ENCODE measurements at regions of chr2 and their contacts with region 1.

Region 1: GRCh38 chr2:43226558-43226954 is at the start of gene ZFP36L2:
- DNase-seq: peak; percentile 97 to 99
- ATAC-seq: peak; percentile 75 to 81 (median 77)
- H3K4me3 ChIP-seq: peak within 1 kb of the TSS; percentile 75
- H3K27ac ChIP-seq: peak within 1 kb of the TSS; percentile 91
- H3K4me1 ChIP-seq: peaks cover 36% of the 10 kb centered on the region
- H3K27me3 ChIP-seq: no peaks in the 10 kb centered on the region
- CTCF ChIP-seq: no peak
- total RNA-seq, gene ZFP36L2: 48.9 to 103 (median 71.4) TPM

Region 2: GRCh38 chr2:42828487-42829425 is 397.8 kb before region 1 on chr2:
- intact Hi-C with region 1: loop called (anchors 2 to 5 kb)
- DNase-seq: peak; percentile 77 to 85
- ATAC-seq: peak; percentile 85 to 95 (median 88)
- H3K4me3 ChIP-seq: peak overlapping the region; percentile 63
- H3K27ac ChIP-seq: no peak overlapping the region
- H3K4me1 ChIP-seq: peaks cover 9% of the 10 kb centered on the region
- H3K27me3 ChIP-seq: no peaks in the 10 kb centered on the region
- CTCF ChIP-seq: peak; percentile 91

Region 3: GRCh38 chr2:42964439-42965083 is 262.0 kb before region 1 on chr2:
- intact Hi-C with region 1: loop called in 1 of 2 experiments (anchors 5 kb)
- DNase-seq: peak; percentile 94 to 95
- ATAC-seq: peak; percentile 86 to 96 (median 92)
- H3K4me3 ChIP-seq: no peak overlapping the region
- H3K27ac ChIP-seq: peak overlapping the region; percentile 80
- H3K4me1 ChIP-seq: peaks cover 51% of the 10 kb centered on the region
- H3K27me3 ChIP-seq: no peaks in the 10 kb centered on the region
- CTCF ChIP-seq: no peak

Region 4: GRCh38 chr2:43024515-43025011 is 202.0 kb before region 1 on chr2:
- intact Hi-C with region 1: loop called (anchors 1 to 5 kb)
- DNase-seq: peak; percentile 72 to 74
- ATAC-seq: peak; percentile 77 to 87 (median 86)
- H3K4me3 ChIP-seq: no peak overlapping the region
- H3K27ac ChIP-seq: no peak overlapping the region
- H3K4me1 ChIP-seq: no peaks in the 10 kb centered on the region
- H3K27me3 ChIP-seq: no peaks in the 10 kb centered on the region
- CTCF ChIP-seq: peak; percentile 76

Region 5: DNA sequence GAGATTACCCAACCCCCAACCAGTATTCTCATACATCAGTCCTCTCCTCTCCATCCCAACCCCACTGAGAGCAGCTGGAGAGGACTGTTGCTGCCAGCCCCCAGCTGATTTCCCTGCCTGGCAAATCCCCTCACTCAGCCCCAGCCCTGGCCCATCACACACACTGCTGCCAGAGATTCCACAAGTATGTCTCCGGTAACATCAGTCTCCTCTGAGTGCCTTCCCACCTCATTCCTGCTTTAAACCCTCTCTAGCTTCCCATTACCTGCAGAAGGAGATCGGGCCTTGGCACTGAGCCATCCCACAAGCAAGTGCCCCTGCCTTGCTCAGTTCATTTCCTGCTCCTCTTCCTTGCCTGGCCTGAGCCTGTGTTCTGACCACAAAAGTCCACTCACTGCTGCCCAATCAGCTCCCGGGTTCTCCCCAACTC is 50.4 kb after region 1 on chr2:
- intact Hi-C with region 1: no loop called
- DNase-seq: no peak
- ATAC-seq: peak in 2 of 4 donors; percentile 7 to 14
- H3K4me3 ChIP-seq: no peak overlapping the region
- H3K27ac ChIP-seq: peak overlapping the region; percentile 30
- H3K4me1 ChIP-seq: peaks cover 20% of the 10 kb centered on the region
- H3K27me3 ChIP-seq: no peaks in the 10 kb centered on the region
- CTCF ChIP-seq: no peak

Region 6: DNA sequence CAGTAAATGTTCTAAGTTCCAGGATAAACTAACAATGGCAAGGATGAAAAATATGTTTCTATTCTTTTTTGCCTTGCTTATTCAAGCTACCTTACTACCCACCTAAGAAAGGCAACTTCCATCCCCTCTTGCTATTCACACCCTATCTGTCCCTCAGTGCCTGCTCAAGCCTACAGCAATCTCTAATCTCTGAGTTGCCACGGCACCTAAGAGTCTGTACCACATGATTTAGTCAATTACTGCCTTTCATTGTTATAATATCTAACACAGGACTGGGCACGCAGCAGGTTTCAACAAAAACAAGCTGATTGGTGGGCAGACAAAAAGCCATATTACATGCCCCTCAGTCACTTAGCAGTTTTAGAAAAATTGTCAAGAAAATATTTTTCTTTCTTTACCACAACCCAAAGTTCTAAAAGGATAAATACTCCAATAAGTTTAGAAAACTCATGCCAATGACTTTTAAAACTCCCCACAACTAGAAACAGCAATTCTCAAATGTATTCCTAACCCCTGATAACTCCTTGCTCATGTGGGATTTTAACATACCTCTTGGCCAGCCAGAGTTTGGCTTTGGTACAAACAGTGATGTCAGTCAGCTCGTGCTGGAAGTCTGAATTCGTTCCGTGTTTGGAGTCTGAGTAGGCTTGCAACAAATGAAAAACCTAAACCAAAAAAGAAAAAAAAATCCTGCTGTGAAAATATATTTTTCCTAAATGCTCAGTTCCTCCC is 117.2 kb after region 1 on chr2:
- intact Hi-C with region 1: loop called in 1 of 2 experiments (anchors 5 kb)
- DNase-seq: peak; percentile 66 to 71
- ATAC-seq: peak in 3 of 4 donors; percentile 49 to 74 (median 61)
- H3K4me3 ChIP-seq: no peak overlapping the region
- H3K27ac ChIP-seq: peak overlapping the region; percentile 88
- H3K4me1 ChIP-seq: peaks cover 93% of the 10 kb centered on the region
- H3K27me3 ChIP-seq: no peaks in the 10 kb centered on the region
- CTCF ChIP-seq: no peak

Measured in psoas muscle (tissue), 8 donors.